ENCODE measurements at regions of chr10 and their contacts with region 1.

Region 1: DNA sequence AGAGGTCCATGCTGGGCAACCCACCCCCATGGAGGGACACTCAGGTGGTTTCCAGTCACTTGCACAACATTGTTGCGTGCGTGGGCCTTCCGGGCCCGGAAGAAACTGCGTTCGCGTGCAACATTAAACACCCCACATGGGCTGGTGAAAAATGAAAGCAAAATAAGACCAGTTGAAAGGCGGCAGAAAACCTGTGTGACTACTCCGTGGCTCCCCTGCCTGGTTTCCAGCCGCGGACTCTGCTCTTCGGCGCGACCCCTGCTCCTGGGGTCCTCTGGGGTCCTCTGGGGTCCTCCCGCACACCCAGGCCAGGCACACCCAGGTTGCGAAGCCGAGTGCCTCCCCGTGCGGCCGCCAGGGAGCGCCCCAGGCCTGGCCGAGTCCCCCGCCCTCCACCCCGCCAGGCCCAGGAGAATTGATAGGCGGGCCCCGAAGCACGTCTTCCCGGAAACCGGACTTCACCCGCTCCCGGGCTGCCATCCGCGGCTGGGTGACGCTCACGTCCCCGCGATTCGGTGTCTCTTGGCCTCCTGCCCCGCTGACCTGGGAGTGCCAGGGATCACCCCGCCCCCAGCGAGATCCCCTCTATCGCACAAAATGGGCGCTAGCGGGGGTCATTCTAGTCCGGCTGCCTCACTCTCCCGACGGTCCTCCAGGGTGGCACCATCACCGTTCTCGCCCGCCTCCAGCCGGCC is 1.9 kb upstream of the SH2D4B start:
- DNase-seq: peak; percentile 76
- ATAC-seq: peak; percentile 89
- H3K4me3 Mint-ChIP-seq: peak overlapping the region; percentile 88
- H3K27ac Mint-ChIP-seq: peak overlapping the region; percentile 89
- H3K4me1 Mint-ChIP-seq: peaks cover 35% of the 10 kb centered on the region
- H3K27me3 Mint-ChIP-seq: no peaks in the 10 kb centered on the region
- CTCF ChIP-seq: peak; percentile 38

Region 2: DNA sequence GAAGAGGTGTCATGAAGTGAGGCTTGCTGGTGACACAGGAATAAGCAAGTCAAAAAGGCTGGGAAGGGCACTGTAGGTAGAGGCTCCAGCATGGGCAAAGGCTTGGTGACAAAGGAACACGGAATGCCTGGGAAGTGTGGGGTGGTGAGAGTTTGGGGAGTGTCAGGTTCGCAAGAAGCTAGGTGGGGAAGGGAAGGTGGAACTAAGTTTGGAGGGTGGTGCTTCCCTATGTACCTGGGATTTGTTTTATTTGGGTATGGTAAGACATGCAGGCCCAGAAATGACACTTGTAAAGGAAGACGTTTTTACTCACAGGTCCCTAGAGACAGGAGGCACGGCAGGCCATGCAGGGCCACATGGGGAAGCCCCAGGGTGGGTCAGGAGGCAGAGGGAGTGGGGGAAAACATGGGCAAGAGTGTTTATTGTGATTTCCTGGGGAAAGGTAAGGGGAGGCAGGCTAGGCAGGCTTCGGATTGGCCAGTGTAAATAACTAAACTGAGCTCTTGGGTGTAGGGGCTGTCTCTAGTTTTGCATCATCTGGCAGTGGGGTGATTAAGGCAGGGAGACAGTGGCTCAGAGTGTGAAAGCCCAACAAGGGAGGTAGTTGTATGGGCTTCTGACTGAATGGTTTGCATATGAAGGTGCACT is 54.0 kb after region 1 on chr10:
- CTCF ChIA-PET with region 1: no interaction called
- POLR2A ChIA-PET with region 1: interaction called, 3 read pairs
- intact Hi-C with region 1: loop called (anchors 2 kb)
- DNase-seq: peak; percentile 23
- ATAC-seq: peak; percentile 95
- H3K4me3 Mint-ChIP-seq: peak overlapping the region; percentile 24
- H3K27ac Mint-ChIP-seq: peak overlapping the region; percentile 81
- H3K4me1 Mint-ChIP-seq: peaks cover 20% of the 10 kb centered on the region
- H3K27me3 Mint-ChIP-seq: no peaks in the 10 kb centered on the region
- CTCF ChIP-seq: no peak

Region 3: DNA sequence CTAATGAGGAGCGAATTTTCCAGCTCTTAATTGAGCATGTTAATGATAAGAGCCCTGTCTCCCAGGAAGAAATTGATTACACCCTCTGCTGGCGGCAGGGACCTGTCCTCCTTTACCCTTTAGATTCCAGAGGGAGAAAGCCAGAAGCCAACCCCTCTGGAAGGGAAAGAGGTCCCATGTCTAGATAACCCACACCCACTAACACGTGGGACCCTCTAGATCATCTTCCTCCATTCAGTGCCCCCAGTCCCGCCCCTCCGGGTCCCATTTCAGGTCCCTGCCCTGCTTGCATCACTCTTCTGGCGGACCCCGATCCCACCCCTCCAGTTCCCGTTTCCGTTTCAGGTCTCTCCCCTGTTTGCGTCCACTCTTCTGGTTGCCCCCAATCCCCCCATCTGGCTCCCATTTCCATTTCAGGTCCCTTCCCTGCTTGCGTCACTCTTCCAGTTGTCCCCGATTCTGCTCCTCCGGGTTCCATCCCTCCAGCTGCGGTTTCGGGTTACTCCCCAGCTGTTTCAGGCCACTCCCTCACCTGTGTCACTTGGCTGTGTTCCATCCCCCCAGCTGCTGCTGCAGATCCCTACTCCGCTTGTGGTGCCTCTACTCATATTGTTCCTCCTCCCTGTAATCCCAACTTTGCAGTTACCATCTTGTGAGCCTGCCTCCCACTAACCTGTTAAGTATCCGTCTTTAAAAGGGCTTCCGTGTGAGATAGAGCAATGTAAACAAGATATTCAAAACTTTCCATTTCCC is 204.3 kb after region 1 on chr10:
- CTCF ChIA-PET with region 1: no interaction called
- POLR2A ChIA-PET with region 1: no interaction called
- intact Hi-C with region 1: no loop called
- DNase-seq: no peak
- ATAC-seq: no peak
- H3K4me3 Mint-ChIP-seq: no peak overlapping the region
- H3K27ac Mint-ChIP-seq: no peak overlapping the region
- H3K4me1 Mint-ChIP-seq: no peaks in the 10 kb centered on the region
- H3K27me3 Mint-ChIP-seq: peaks cover 8% of the 10 kb centered on the region
- CTCF ChIP-seq: no peak

Region 4: GRCh38 chr10:80924063-80924952 is 388.5 kb after region 1 on chr10:
- CTCF ChIA-PET with region 1: interaction called, 6 read pairs
- POLR2A ChIA-PET with region 1: no interaction called
- intact Hi-C with region 1: loop called (anchors 1 kb)
- DNase-seq: no peak
- ATAC-seq: no peak
- H3K4me3 Mint-ChIP-seq: no peak overlapping the region
- H3K27ac Mint-ChIP-seq: no peak overlapping the region
- H3K4me1 Mint-ChIP-seq: no peaks in the 10 kb centered on the region
- H3K27me3 Mint-ChIP-seq: no peaks in the 10 kb centered on the region
- CTCF ChIP-seq: no peak